Endothelial cell of umbilical vein (primary cell): ENCODE measurements at regions of chr6 and their contacts with region 1.

Region 1: GRCh38 chr6:109705258-109705657 is 14.2 kb downstream of the FIG4 start:
- DNase-seq: peak; percentile 90
- H3K4me3 ChIP-seq: no peak overlapping the region
- H3K27ac ChIP-seq: no peak overlapping the region
- H3K4me1 ChIP-seq: no peaks in the 10 kb centered on the region
- H3K27me3 ChIP-seq: no peaks in the 10 kb centered on the region
- CTCF ChIP-seq: peak; percentile 91 to 99
- POLR2A ChIP-seq: no peak

Region 2: GRCh38 chr6:109526905-109527628 is 178.2 kb before region 1 on chr6:
- CTCF ChIA-PET with region 1: interaction called, 29 read pairs
- POLR2A ChIA-PET with region 1: no interaction called
- dilution Hi-C with region 1: no loop called
- intact Hi-C with region 1: loop called (anchors 1 kb)
- DNase-seq: peak; percentile 67
- H3K4me3 ChIP-seq: no peak overlapping the region
- H3K27ac ChIP-seq: no peak overlapping the region
- H3K4me1 ChIP-seq: no peaks in the 10 kb centered on the region
- H3K27me3 ChIP-seq: no peaks in the 10 kb centered on the region
- CTCF ChIP-seq: peak; percentile 45 to 60
- POLR2A ChIP-seq: no peak

Region 3: DNA sequence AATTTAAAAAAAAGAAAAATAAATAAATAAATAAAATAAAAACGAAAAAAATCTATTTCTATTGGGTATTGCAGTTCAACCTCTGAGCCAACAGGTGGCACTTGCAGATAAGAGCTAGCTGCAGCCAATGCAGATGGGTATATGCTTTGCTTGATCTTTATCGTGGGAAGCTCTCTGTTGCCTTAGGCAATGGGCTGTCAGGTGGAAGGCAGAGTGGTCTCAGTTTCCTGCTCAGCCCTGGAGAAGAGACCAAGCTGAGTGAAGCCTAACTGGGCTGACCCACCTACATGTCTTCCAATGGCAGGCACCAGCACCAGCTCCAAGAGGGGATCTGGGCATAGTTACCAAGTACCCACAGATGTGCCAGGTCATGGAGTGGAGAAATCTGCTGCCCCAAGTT is 109.3 kb before region 1 on chr6:
- CTCF ChIA-PET with region 1: interaction called, 32 read pairs
- POLR2A ChIA-PET with region 1: no interaction called
- dilution Hi-C with region 1: no loop called
- intact Hi-C with region 1: loop called (anchors 1 kb)
- DNase-seq: peak; percentile 50
- H3K4me3 ChIP-seq: no peak overlapping the region
- H3K27ac ChIP-seq: no peak overlapping the region
- H3K4me1 ChIP-seq: no peaks in the 10 kb centered on the region
- H3K27me3 ChIP-seq: no peaks in the 10 kb centered on the region
- CTCF ChIP-seq: peak in 1 of 2 donors; percentile 51
- POLR2A ChIP-seq: no peak

Region 4: GRCh38 chr6:109783250-109783986 is 78.2 kb after region 1 on chr6:
- CTCF ChIA-PET with region 1: interaction called, 6 read pairs
- POLR2A ChIA-PET with region 1: no interaction called
- dilution Hi-C with region 1: no loop called
- intact Hi-C with region 1: loop called (anchors 1 kb)
- DNase-seq: no peak
- H3K4me3 ChIP-seq: no peak overlapping the region
- H3K27ac ChIP-seq: no peak overlapping the region
- H3K4me1 ChIP-seq: no peaks in the 10 kb centered on the region
- H3K27me3 ChIP-seq: no peaks in the 10 kb centered on the region
- CTCF ChIP-seq: peak; percentile 5 to 12
- POLR2A ChIP-seq: no peak

Region 5: GRCh38 chr6:110053395-110054240 is 348.4 kb after region 1 on chr6:
- CTCF ChIA-PET with region 1: interaction called, 14 read pairs
- POLR2A ChIA-PET with region 1: no interaction called
- dilution Hi-C with region 1: no loop called
- intact Hi-C with region 1: loop called (anchors 1 kb)
- DNase-seq: peak; percentile 44
- H3K4me3 ChIP-seq: no peak overlapping the region
- H3K27ac ChIP-seq: no peak overlapping the region
- H3K4me1 ChIP-seq: no peaks in the 10 kb centered on the region
- H3K27me3 ChIP-seq: peaks cover 3 to 29% of the 10 kb centered on the region in 2 experiments
- CTCF ChIP-seq: peak; percentile 56 to 63
- POLR2A ChIP-seq: no peak

Region 6: GRCh38 chr6:110179401-110180227 is 474.4 kb after region 1 on chr6 and contains the start of gene WASF1:
- CTCF ChIA-PET with region 1: no interaction called
- POLR2A ChIA-PET with region 1: no interaction called
- dilution Hi-C with region 1: no loop called
- intact Hi-C with region 1: loop called (anchors 5 kb)
- DNase-seq: peak; percentile 99
- H3K4me3 ChIP-seq: peak within 1 kb of the TSS; percentile 61 to 94 (median 92)
- H3K27ac ChIP-seq: peak within 1 kb of the TSS; percentile 87
- H3K4me1 ChIP-seq: peaks cover 30% of the 10 kb centered on the region
- H3K27me3 ChIP-seq: no peaks in the 10 kb centered on the region
- CTCF ChIP-seq: no peak
- POLR2A ChIP-seq: peak; percentile 63
- total RNA-seq, gene WASF1: 20.9 and 23.2 TPM in 2 replicates